CD8-positive, alpha-beta T cell (primary cell): ENCODE measurements at regions of chr2 and their contacts with region 1.

Region 1: DNA sequence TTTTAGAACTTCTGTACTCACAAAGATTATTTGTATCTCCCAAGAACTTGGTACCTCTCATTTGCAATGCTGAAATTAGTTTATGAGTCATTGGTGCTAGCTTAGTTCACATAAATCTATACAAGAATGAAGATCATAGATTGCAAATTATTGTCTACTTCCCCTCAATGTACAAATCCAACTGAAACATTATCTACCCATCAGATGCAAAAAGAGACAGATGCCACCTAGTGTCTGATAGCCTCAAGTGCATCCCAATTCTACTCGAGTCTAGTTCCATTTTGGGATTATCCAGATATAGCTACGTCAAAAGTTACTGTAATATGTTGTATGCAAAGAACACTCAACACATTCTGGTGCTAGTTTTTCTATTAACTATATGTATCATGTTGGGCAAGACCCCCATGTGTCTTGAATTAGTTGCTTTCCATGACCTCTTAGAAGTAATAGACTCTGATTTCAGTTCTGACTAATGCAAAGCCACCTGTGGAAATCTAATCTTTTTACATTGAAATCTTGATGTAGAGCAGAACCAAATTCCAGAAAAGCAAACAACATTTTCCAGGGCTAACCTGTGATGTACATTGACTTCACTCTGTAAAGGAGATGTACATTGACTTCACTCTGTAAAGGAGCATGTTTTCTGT is 210.0 kb downstream of the RBM43 start:
- DNase-seq: peak in 3 of 9 experiments; percentile 12 to 57 (median 47)
- ATAC-seq: no peak
- H3K4me3 ChIP-seq: no peak overlapping the region
- H3K4me3 Mint-ChIP-seq: no peak overlapping the region
- H3K27ac ChIP-seq: no peak overlapping the region
- H3K27ac Mint-ChIP-seq: no peak overlapping the region
- H3K4me1 ChIP-seq: no peaks in the 10 kb centered on the region
- H3K4me1 Mint-ChIP-seq: no peaks in the 10 kb centered on the region
- H3K27me3 ChIP-seq: peaks cover 0 to 3% of the 10 kb centered on the region in 2 experiments
- H3K27me3 Mint-ChIP-seq: peaks cover 11% of the 10 kb centered on the region
- CTCF ChIP-seq: peak; percentile 79

Region 2: GRCh38 chr2:151007365-151007764 is 44.3 kb before region 1 on chr2:
- CTCF ChIA-PET with region 1: no interaction called
- POLR2A ChIA-PET with region 1: no interaction called
- intact Hi-C with region 1: no loop called
- DNase-seq: no peak
- ATAC-seq: no peak
- H3K4me3 ChIP-seq: no peak overlapping the region
- H3K4me3 Mint-ChIP-seq: no peak overlapping the region
- H3K27ac ChIP-seq: no peak overlapping the region
- H3K27ac Mint-ChIP-seq: no peak overlapping the region
- H3K4me1 ChIP-seq: no peaks in the 10 kb centered on the region
- H3K4me1 Mint-ChIP-seq: no peaks in the 10 kb centered on the region
- H3K27me3 ChIP-seq: no peaks in the 10 kb centered on the region
- H3K27me3 Mint-ChIP-seq: no peaks in the 10 kb centered on the region
- CTCF ChIP-seq: no peak

Region 3: GRCh38 chr2:151020411-151020810 is 31.3 kb before region 1 on chr2:
- CTCF ChIA-PET with region 1: no interaction called
- POLR2A ChIA-PET with region 1: no interaction called
- intact Hi-C with region 1: no loop called
- DNase-seq: no peak
- ATAC-seq: no peak
- H3K4me3 ChIP-seq: no peak overlapping the region
- H3K4me3 Mint-ChIP-seq: no peak overlapping the region
- H3K27ac ChIP-seq: no peak overlapping the region
- H3K27ac Mint-ChIP-seq: no peak overlapping the region
- H3K4me1 ChIP-seq: no peaks in the 10 kb centered on the region
- H3K4me1 Mint-ChIP-seq: no peaks in the 10 kb centered on the region
- H3K27me3 ChIP-seq: no peaks in the 10 kb centered on the region
- H3K27me3 Mint-ChIP-seq: peaks cover 20% of the 10 kb centered on the region
- CTCF ChIP-seq: no peak

Region 4: GRCh38 chr2:151032741-151033191 is 18.9 kb before region 1 on chr2:
- CTCF ChIA-PET with region 1: interaction called, 12 read pairs
- POLR2A ChIA-PET with region 1: no interaction called
- intact Hi-C with region 1: no loop called
- DNase-seq: no peak
- ATAC-seq: no peak
- H3K4me3 ChIP-seq: no peak overlapping the region
- H3K4me3 Mint-ChIP-seq: no peak overlapping the region
- H3K27ac ChIP-seq: no peak overlapping the region
- H3K27ac Mint-ChIP-seq: no peak overlapping the region
- H3K4me1 ChIP-seq: no peaks in the 10 kb centered on the region
- H3K4me1 Mint-ChIP-seq: peaks cover 4% of the 10 kb centered on the region
- H3K27me3 ChIP-seq: no peaks in the 10 kb centered on the region
- H3K27me3 Mint-ChIP-seq: peaks cover 12% of the 10 kb centered on the region
- CTCF ChIP-seq: no peak

Region 5: GRCh38 chr2:151040039-151040438 is 11.7 kb before region 1 on chr2:
- CTCF ChIA-PET with region 1: interaction called, 16 read pairs
- POLR2A ChIA-PET with region 1: no interaction called
- intact Hi-C with region 1: no loop called
- DNase-seq: no peak
- ATAC-seq: no peak
- H3K4me3 ChIP-seq: no peak overlapping the region
- H3K4me3 Mint-ChIP-seq: no peak overlapping the region
- H3K27ac ChIP-seq: no peak overlapping the region
- H3K27ac Mint-ChIP-seq: no peak overlapping the region
- H3K4me1 ChIP-seq: no peaks in the 10 kb centered on the region
- H3K4me1 Mint-ChIP-seq: no peaks in the 10 kb centered on the region
- H3K27me3 ChIP-seq: no peaks in the 10 kb centered on the region
- H3K27me3 Mint-ChIP-seq: peaks cover 15% of the 10 kb centered on the region
- CTCF ChIP-seq: no peak

Region 6: GRCh38 chr2:151691631-151692030 is 639.9 kb after region 1 on chr2:
- CTCF ChIA-PET with region 1: no interaction called
- POLR2A ChIA-PET with region 1: no interaction called
- intact Hi-C with region 1: no loop called
- DNase-seq: no peak
- ATAC-seq: no peak
- H3K4me3 ChIP-seq: no peak overlapping the region
- H3K4me3 Mint-ChIP-seq: no peak overlapping the region
- H3K27ac ChIP-seq: no peak overlapping the region
- H3K27ac Mint-ChIP-seq: no peak overlapping the region
- H3K4me1 ChIP-seq: no peaks in the 10 kb centered on the region
- H3K4me1 Mint-ChIP-seq: no peaks in the 10 kb centered on the region
- H3K27me3 ChIP-seq: no peaks in the 10 kb centered on the region
- H3K27me3 Mint-ChIP-seq: peaks cover 2% of the 10 kb centered on the region
- CTCF ChIP-seq: no peak